ENCODE measurements at regions of chr9 and their contacts with region 1.

Region 1: GRCh38 chr9:98974994-98975712 is 31.4 kb downstream of the COL15A1 start:
- DNase-seq: peak; percentile 81 to 84 (median 82)
- ATAC-seq: peak; percentile 95 to 99 (median 98)
- H3K4me3 ChIP-seq: no peak overlapping the region
- H3K27ac ChIP-seq: no peak overlapping the region
- H3K4me1 ChIP-seq: no peaks in the 10 kb centered on the region
- H3K27me3 ChIP-seq: no peaks in the 10 kb centered on the region
- CTCF ChIP-seq: peak; percentile 92 to 99 (median 98)
- POLR2A ChIP-seq: no peak

Region 2: GRCh38 chr9:98922721-98923435 is 52.3 kb before region 1 on chr9:
- intact Hi-C with region 1: no loop called
- DNase-seq: no peak
- ATAC-seq: peak; percentile 29 to 67 (median 46)
- H3K4me3 ChIP-seq: no peak overlapping the region
- H3K27ac ChIP-seq: no peak overlapping the region
- H3K4me1 ChIP-seq: no peaks in the 10 kb centered on the region
- H3K27me3 ChIP-seq: no peaks in the 10 kb centered on the region
- CTCF ChIP-seq: no peak
- POLR2A ChIP-seq: no peak

Region 3: DNA sequence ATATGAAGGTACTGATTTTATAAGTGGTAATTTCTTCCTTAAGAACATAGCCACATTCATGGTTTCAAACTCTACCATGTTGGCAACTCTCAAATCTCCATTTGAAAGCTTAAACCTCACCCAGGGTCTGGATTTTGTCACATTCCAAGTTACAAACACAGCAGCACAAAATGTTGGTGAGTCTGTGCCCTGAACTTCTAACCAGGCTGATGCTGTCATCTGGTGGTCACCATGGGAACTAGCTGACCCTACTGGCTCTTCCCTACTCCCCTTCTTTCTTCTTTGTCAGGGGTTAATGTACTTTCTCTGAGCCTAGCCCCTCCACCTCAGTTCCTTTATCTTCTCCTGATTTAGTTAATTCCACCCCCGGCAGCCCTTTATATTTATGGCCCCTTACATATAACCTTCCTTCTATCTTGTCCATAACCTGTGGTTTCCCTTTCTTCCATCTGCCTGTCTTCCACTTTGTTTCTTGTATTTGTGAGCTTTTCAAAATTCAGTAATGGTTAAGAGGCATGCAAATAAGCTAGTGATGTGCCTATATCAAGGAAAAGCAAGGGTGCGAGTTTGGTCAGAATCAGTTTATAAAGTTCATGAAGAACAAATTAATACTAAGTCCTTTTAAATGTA is 165.6 kb after region 1 on chr9:
- intact Hi-C with region 1: loop called in 1 of 2 experiments (anchors 10 kb)
- DNase-seq: no peak
- ATAC-seq: peak; percentile 75 to 81 (median 80)
- H3K4me3 ChIP-seq: no peak overlapping the region
- H3K27ac ChIP-seq: no peak overlapping the region
- H3K4me1 ChIP-seq: no peaks in the 10 kb centered on the region
- H3K27me3 ChIP-seq: no peaks in the 10 kb centered on the region
- CTCF ChIP-seq: peak; percentile 61 to 84 (median 76)
- POLR2A ChIP-seq: no peak

Measured in right lobe of liver (tissue), 6 donors.